ENCODE measurements at regions of chr19 and their contacts with region 1.

Region 1: DNA sequence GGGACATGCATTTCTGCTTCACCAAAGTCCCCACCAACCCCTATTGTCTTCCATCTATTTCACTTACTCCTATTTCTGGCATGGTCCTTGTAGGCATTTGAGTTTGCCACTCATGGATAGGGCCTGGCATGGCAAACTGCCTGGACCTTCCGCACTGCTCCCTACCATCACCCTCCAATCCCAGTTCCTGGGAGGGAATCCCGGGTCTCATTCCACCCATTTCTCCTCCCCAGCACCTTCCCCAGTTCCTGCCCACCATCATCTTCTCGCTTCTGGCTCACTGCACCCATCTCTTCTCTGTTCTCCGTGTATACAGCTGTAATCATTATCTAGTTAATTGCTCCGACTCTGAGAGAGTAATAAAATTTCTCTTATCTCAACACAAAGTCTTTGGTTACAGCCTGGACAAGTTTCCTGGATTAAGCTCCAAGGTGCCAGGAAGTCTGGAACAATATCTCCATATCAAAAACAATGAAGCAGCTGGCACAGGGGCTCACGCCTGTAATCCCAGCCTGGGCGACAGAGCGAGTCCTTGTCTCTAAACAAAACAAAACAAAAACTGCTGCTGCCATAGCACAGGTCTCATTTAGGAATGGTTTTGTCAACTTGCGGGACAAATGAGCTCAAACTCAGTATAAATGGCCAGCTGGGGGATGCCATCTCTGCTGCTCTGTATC is 17.0 kb upstream of the COX7A1 start:
- DNase-seq: no peak
- H3K4me3 ChIP-seq: no peak overlapping the region
- H3K27ac ChIP-seq: no peak overlapping the region
- H3K4me1 ChIP-seq: no peaks in the 10 kb centered on the region
- CTCF ChIP-seq: no peak

Region 2: GRCh38 chr19:35995048-35995993 is 173.9 kb before region 1 on chr19 and contains the start of gene SDHAF1:
- CTCF ChIA-PET with region 1: no interaction called
- POLR2A ChIA-PET with region 1: no interaction called
- intact Hi-C with region 1: no loop called
- DNase-seq: peak; percentile 96
- H3K4me3 ChIP-seq: peak within 1 kb of the TSS; percentile 89
- H3K27ac ChIP-seq: peak within 1 kb of the TSS; percentile 53
- H3K4me1 ChIP-seq: peaks cover 16% of the 10 kb centered on the region
- CTCF ChIP-seq: peak; percentile 32; the same call in 1 of the 2 replicates
- total RNA-seq, gene SDHAF1: 52.6 and 60.9 TPM in 2 replicates

Region 3: DNA sequence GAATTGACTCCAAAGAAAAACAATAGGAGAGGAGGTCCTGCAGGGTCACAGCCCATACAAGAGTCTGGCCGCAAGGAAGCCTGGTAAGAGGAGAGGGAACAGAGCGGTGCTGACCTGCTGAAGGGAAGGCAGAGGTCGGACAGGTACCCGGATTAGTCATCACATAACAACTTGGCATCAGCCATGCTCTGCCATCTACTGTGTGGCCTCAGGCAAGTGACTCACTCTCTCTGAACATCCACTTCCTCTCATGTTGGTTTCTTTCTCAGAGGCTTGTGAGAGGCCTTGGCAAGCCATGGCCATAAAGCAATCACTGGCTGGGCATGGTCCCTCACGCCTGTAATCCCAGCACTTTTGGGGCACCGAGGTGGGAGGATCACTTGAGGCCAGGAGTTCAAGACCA is 36.7 kb before region 1 on chr19:
- CTCF ChIA-PET with region 1: interaction called, 3 read pairs
- POLR2A ChIA-PET with region 1: interaction called, 3 read pairs
- intact Hi-C with region 1: loop called (anchors 1 kb)
- DNase-seq: no peak
- H3K4me3 ChIP-seq: no peak overlapping the region
- H3K27ac ChIP-seq: no peak overlapping the region
- H3K4me1 ChIP-seq: peaks cover 21% of the 10 kb centered on the region
- CTCF ChIP-seq: no peak

Region 4: GRCh38 chr19:36198119-36198518 is 28.9 kb after region 1 on chr19:
- CTCF ChIA-PET with region 1: no interaction called
- POLR2A ChIA-PET with region 1: no interaction called
- intact Hi-C with region 1: no loop called
- DNase-seq: no peak
- H3K4me3 ChIP-seq: no peak overlapping the region
- H3K27ac ChIP-seq: no peak overlapping the region
- H3K4me1 ChIP-seq: peaks cover 10% of the 10 kb centered on the region
- CTCF ChIP-seq: no peak

Region 5: GRCh38 chr19:36236304-36236945 is 67.2 kb after region 1 on chr19:
- CTCF ChIA-PET with region 1: no interaction called
- POLR2A ChIA-PET with region 1: no interaction called
- intact Hi-C with region 1: no loop called
- DNase-seq: no peak
- H3K4me3 ChIP-seq: no peak overlapping the region
- H3K27ac ChIP-seq: no peak overlapping the region
- H3K4me1 ChIP-seq: no peaks in the 10 kb centered on the region
- CTCF ChIP-seq: no peak

Region 6: DNA sequence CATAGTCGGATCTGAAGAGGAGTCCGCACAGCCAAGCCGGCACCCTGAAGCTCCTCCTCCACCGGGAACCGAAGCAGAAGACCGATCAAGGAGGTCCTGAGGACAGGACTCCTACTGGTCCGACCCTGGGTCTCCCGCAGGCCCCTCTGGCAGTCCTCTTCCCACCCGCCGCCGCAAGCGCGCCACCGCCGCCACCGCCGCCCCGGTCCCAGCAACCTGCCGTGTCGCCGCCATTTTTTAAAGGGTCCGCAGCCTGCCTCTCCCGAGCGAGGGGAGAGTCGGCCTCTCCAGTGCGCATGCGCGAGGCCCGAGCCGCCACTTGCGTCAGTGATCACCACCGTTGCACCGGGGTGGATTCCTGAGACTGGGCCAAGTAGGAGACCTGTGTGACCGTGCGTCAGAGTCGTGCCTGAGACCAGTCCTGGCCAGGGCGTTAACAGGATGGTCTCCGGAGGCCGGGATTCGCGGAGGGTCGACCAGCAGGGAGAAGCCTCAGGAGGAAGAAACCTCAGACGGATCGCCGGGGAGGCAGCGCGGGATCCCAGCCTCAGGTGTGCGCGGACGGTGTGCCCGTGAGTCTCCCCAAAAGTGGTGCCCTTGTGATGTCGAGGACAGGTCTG is 97.2 kb after region 1 on chr19:
- CTCF ChIA-PET with region 1: no interaction called
- POLR2A ChIA-PET with region 1: no interaction called
- intact Hi-C with region 1: no loop called
- DNase-seq: no peak
- H3K4me3 ChIP-seq: no peak overlapping the region
- H3K27ac ChIP-seq: no peak overlapping the region
- H3K4me1 ChIP-seq: no peaks in the 10 kb centered on the region
- CTCF ChIP-seq: no peak

Measured in OCI-LY7 (cell line).